ENCODE measurements at regions of chr3 and their contacts with region 1.

Region 1: GRCh38 chr3:38164966-38165680 is at the start of gene OXSR1:
- DNase-seq: peak; percentile 100
- H3K4me3 ChIP-seq: peak within 1 kb of the TSS; percentile 71 to 91 (median 83)
- H3K27ac ChIP-seq: peak within 1 kb of the TSS; percentile 99 to 100
- H3K4me1 ChIP-seq: peaks cover 9 to 24% (median 20%) of the 10 kb centered on the region in 4 experiments
- H3K27me3 ChIP-seq: no peaks in the 10 kb centered on the region

Region 2: DNA sequence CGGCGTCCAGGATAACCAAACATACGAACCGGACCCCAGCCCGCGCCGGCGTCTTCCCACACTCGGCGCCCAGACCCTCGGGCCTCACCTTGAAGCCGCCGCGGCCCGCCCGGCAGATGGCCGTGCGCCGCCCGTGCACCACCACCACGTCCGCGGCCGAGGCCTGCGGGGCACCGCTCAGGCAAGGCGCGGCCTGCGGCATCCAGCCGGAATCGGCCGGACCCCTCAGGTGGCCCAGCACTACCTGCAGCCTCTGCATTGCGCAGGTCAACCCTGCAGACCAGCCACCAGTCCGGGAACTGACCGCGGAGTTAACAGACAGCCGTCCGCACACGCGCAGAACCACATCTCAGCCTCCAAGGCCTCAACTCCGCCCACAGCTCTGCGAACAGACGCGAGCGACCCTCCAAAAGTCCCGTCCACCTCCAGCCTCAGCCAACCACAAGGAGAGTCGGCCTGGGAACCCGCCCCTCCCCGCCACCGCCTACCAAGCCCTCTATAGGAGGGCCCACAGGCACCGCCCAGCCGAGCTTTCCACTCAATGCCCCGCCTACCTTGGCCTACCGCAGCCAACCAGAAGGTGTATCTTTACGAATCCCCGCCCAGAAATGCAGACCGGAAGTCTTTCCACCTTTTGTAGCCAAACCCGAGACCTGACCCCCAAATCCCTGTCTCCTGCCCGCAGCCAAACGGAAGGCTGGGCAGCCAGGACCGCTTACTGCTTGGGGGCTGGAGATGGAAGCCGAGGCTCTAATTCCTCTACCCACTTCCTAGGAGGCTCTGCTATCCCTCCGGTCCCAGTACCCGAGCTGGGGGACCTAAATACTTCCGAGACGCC is 28.1 kb before region 1 on chr3 and contains the start of gene ACAA1:
- CTCF ChIA-PET with region 1: interaction called, 27 read pairs
- POLR2A ChIA-PET with region 1: interaction called, 17 read pairs
- DNase-seq: peak; percentile 98 to 99 (median 99)
- H3K4me3 ChIP-seq: peak within 1 kb of the TSS; percentile 81 to 97 (median 92)
- H3K27ac ChIP-seq: peak within 1 kb of the TSS; percentile 61 to 82
- H3K4me1 ChIP-seq: peaks cover 2 to 53% (median 45%) of the 10 kb centered on the region in 4 experiments
- H3K27me3 ChIP-seq: no peaks in the 10 kb centered on the region